CD4-positive, alpha-beta T cell (primary cell): ENCODE measurements at regions of chr2 and their contacts with region 1.

Region 1: GRCh38 chr2:197356136-197356535 is 45.6 kb upstream of the ANKRD44 start:
- DNase-seq: peak in 3 of 14 experiments; percentile 25 to 54 (median 47)
- ATAC-seq: peak; percentile 78
- H3K4me3 ChIP-seq: no peak overlapping the region
- H3K4me3 Mint-ChIP-seq: no peak overlapping the region
- H3K27ac ChIP-seq: no peak overlapping the region
- H3K27ac Mint-ChIP-seq: no peak overlapping the region
- H3K4me1 ChIP-seq: no peaks in the 10 kb centered on the region
- H3K4me1 Mint-ChIP-seq: peaks cover 27% of the 10 kb centered on the region
- H3K27me3 ChIP-seq: no peaks in the 10 kb centered on the region
- H3K27me3 Mint-ChIP-seq: no peaks in the 10 kb centered on the region
- CTCF ChIP-seq: peak; percentile 56

Region 2: GRCh38 chr2:197322724-197323720 is 33.1 kb before region 1 on chr2:
- CTCF ChIA-PET with region 1: interaction called, 5 read pairs
- POLR2A ChIA-PET with region 1: interaction called, 3 read pairs
- intact Hi-C with region 1: loop called in 1 of 2 experiments (anchors 5 kb)
- DNase-seq: peak in 4 of 14 experiments; percentile 45 to 51 (median 49)
- ATAC-seq: peak; percentile 84
- H3K4me3 ChIP-seq: peak overlapping the region; percentile 19
- H3K4me3 Mint-ChIP-seq: peak overlapping the region; percentile 62
- H3K27ac ChIP-seq: peak overlapping the region; percentile 63 to 69
- H3K27ac Mint-ChIP-seq: peak overlapping the region; percentile 94
- H3K4me1 ChIP-seq: peaks cover 42% of the 10 kb centered on the region
- H3K4me1 Mint-ChIP-seq: peaks cover 64% of the 10 kb centered on the region
- H3K27me3 ChIP-seq: no peaks in the 10 kb centered on the region
- H3K27me3 Mint-ChIP-seq: no peaks in the 10 kb centered on the region
- CTCF ChIP-seq: no peak